Activated CD8-positive, alpha-beta memory T cell treated with anti-CD3 and anti-CD28 coated beads, Interleukin-2, amount 10 ng/mL, durations not matched to agents 7 days and 5 days (primary cell): ENCODE measurements at regions of chr6 and their contacts with region 1.

Region 1: DNA sequence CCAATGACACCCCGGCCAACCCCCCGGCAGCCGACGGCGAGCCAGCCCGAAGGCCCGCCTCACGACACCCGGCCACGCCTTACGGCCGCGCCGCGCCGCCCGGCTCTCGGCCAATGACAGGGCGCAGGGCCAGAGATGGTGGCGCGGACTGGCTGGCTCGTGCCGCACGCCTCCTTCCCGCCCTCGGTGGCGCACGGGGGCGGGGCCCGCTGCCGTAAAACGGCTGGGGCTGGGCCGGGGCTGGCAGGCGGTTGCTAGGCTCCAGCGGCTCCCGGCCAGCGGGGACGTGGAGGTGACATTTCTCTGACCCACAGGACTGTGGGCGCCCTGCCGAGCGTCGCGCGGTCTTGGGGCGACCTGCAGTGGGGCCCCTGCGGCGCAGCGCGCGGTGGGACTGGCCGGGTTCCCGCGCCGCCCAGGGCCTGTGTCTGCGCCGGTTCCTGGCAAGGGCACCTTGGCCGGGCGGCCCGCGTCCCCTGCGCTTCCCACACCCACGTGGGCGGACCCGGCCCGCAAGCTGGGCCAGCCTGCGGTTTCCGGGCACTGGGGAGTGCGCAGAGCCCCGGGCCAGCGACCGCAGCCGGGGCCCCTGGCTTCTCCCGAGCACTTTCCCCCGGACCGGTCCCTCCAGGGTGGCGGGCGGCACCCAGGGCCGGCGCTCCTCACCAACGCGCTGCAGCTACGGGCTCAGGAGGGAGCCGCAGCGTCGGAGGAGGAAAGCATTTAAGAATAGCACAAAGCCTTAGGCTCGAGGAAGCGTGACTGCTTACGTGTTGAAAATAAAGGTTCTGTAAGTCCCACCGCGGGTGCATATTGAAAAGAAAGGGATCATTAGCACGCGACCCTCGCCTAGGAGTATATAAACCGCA is at the start of gene MPC1:
- DNase-seq: peak; percentile 96
- ATAC-seq: peak; percentile 93
- H3K4me3 Mint-ChIP-seq: peak within 1 kb of the TSS; percentile 87
- H3K27ac Mint-ChIP-seq: peak within 1 kb of the TSS; percentile 83
- H3K4me1 Mint-ChIP-seq: peaks cover 15% of the 10 kb centered on the region
- H3K27me3 Mint-ChIP-seq: peaks cover 2% of the 10 kb centered on the region
- total RNA-seq, gene MPC1: 29.4 to 37.4 TPM

Region 2: DNA sequence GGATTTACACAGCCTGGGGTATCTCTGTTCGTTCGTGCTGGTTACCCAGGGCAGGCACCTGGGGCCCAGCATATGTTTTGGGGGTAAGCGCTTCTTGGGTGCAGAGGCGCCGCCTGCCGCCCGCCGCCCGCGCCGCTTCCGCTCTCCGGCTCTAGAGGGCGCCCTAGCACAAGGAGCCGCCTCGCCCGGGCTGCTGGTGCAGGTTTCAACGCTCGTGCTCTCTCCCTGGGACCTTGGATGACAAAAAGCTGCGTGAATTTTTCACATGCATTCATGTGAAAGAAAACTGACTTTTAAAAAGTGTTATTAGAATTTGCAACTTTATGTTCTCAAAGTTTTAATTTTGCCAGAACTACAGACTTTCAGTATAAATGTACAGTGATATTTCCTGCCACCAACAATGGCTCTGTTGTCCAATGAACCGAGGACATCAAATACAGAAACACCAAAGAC is 107.4 kb before region 1 on chr6:
- CTCF ChIA-PET with region 1: interaction called, 12 read pairs
- DNase-seq: peak; percentile 81
- ATAC-seq: peak; percentile 93
- H3K4me3 Mint-ChIP-seq: no peak overlapping the region
- H3K27ac Mint-ChIP-seq: no peak overlapping the region
- H3K4me1 Mint-ChIP-seq: peaks cover 7% of the 10 kb centered on the region
- H3K27me3 Mint-ChIP-seq: peaks cover 21% of the 10 kb centered on the region

Region 3: DNA sequence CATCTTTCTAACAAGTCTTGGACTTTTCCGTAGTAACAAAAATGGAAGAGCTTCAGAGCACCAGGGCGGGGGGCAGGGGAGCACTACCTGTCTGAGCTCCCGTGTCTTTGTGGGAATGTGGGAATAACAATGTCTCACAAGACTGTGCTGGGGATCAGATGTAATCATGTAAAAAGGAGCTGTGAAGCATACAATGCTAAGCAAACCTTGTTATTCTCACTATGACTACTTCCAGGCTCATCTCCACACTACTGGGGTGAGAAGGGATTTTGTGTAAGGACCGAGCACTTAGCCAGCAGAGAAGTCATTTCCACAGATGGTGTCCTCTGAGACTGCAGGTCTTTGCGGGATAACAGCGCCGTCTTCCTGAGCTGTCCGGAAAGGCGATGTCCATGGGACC is 102.1 kb before region 1 on chr6:
- CTCF ChIA-PET with region 1: interaction called, 12 read pairs
- DNase-seq: no peak
- ATAC-seq: no peak
- H3K4me3 Mint-ChIP-seq: no peak overlapping the region
- H3K27ac Mint-ChIP-seq: no peak overlapping the region
- H3K4me1 Mint-ChIP-seq: peaks cover 1% of the 10 kb centered on the region
- H3K27me3 Mint-ChIP-seq: peaks cover 33% of the 10 kb centered on the region

Region 4: GRCh38 chr6:166313255-166314070 is 69.7 kb before region 1 on chr6:
- CTCF ChIA-PET with region 1: interaction called, 93 read pairs
- DNase-seq: peak; percentile 71
- ATAC-seq: peak; percentile 91
- H3K4me3 Mint-ChIP-seq: no peak overlapping the region
- H3K27ac Mint-ChIP-seq: no peak overlapping the region
- H3K4me1 Mint-ChIP-seq: no peaks in the 10 kb centered on the region
- H3K27me3 Mint-ChIP-seq: peaks cover 32% of the 10 kb centered on the region

Region 5: GRCh38 chr6:166333172-166333995 is 49.8 kb before region 1 on chr6:
- CTCF ChIA-PET with region 1: interaction called, 11 read pairs
- DNase-seq: peak; percentile 78
- ATAC-seq: peak; percentile 92
- H3K4me3 Mint-ChIP-seq: peak overlapping the region; percentile 54
- H3K27ac Mint-ChIP-seq: peak overlapping the region; percentile 75
- H3K4me1 Mint-ChIP-seq: peaks cover 39% of the 10 kb centered on the region
- H3K27me3 Mint-ChIP-seq: peaks cover 4% of the 10 kb centered on the region

Region 6: DNA sequence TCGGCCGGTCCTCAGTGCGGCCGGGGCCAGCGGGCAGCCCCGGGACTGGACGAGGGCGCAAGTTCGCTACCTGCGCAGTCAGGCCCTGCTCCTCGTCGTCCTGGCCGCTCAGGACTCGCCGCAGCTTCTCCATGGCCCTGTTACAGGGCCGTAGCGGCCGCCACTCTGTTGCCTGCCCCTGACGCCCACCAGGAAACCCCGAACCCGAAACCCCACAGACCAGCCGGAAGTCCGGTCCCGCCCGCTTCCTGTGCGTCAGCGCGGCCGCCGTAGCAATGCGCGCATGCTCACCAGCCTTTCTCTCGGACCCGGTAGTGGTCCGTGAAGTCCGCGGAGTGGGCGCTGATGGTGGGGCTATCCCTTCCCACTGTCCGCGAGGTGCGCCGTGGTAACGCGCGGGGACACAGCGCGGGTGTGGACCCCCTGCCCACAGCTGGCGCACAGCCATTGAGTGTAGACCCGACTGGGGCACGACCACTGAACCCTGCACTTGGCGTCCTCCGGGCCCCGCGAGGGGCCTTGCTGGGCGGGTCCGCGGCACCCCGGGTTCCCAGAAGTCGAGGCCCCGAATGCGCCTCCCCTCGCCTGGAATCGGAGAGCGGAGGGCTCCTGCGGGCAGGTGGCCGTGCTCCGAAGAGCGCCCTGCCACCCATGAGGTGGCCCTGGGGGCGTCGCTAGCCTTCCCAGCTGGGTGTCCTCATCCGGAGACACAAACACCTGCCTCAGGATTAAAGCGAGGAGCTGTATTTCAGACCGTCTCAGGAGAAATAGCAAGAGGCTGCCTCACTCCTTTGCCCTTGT is 40.6 kb before region 1 on chr6 and contains the start of gene SFT2D1:
- CTCF ChIA-PET with region 1: interaction called, 18 read pairs
- DNase-seq: peak; percentile 91
- ATAC-seq: peak; percentile 81
- H3K4me3 Mint-ChIP-seq: peak within 1 kb of the TSS; percentile 89
- H3K27ac Mint-ChIP-seq: peak within 1 kb of the TSS; percentile 90
- H3K4me1 Mint-ChIP-seq: peaks cover 11% of the 10 kb centered on the region
- H3K27me3 Mint-ChIP-seq: peaks cover 14% of the 10 kb centered on the region
- total RNA-seq, gene SFT2D1: 35.6 to 40.0 TPM

Region 7: GRCh38 chr6:166402582-166403277 is 19.6 kb after region 1 on chr6:
- CTCF ChIA-PET with region 1: interaction called, 50 read pairs
- DNase-seq: peak; percentile 29
- ATAC-seq: no peak
- H3K4me3 Mint-ChIP-seq: no peak overlapping the region
- H3K27ac Mint-ChIP-seq: no peak overlapping the region
- H3K4me1 Mint-ChIP-seq: no peaks in the 10 kb centered on the region
- H3K27me3 Mint-ChIP-seq: peaks cover 7% of the 10 kb centered on the region